Dorsolateral prefrontal cortex (tissue), 120 donors: ENCODE measurements at regions of chr17 and their contacts with region 1.

Region 1: DNA sequence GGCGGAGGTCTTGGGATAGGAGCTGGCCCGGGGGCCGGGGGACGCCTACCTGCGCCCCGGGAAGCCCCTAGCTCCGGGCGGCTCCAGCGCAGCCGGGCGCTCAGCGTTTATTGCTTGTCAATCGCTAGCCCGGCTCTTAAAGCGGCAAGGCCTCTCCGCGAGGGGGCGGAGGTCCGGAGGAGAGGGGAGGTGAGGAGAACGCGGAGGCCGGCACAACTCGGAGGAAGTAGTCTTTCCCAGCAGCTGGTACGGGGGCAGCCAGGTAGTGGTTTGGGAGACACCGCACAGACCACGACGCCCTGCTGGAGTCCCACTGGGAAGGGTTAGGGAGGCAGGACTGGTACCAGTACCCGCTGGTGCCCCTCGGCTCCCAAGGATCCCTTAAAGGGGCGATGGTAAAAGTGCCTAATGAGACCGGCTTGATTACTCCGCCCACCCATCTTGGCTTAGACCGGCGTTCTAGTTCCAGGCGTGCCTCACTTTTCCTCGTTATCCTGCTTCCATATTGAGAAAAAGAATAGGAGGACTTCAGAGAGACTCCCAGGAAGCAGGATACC is at the start of gene MPP2:
- DNase-seq: peak; percentile 70 to 92 (median 87)
- H3K4me3 ChIP-seq: peak within 1 kb of the TSS; percentile 59 to 98 (median 91)
- H3K27ac ChIP-seq: peak within 1 kb of the TSS; percentile 91 to 100 (median 98)
- H3K27me3 ChIP-seq: peaks cover 0 to 4% (median 0%) of the 10 kb centered on the region in 45 donors
- CTCF ChIP-seq: peak in 43 of 56 donors; percentile 0 to 62 (median 40)
- total RNA-seq, gene MPP2: 41.7 to 92.6 (median 64.0) TPM

Region 2: GRCh38 chr17:43778337-43779144 is 129.0 kb before region 1 on chr17 and contains the start of gene DUSP3:
- intact Hi-C with region 1: loop called in 1 of 2 experiments (anchors 5 kb)
- DNase-seq: peak; percentile 89 to 97 (median 94)
- H3K4me3 ChIP-seq: peak within 1 kb of the TSS; percentile 79 to 100 (median 97)
- H3K27ac ChIP-seq: peak within 1 kb of the TSS; percentile 86 to 100 (median 99)
- H3K27me3 ChIP-seq: no peaks in the 10 kb centered on the region
- CTCF ChIP-seq: peak in 7 of 56 donors; percentile 4 to 42 (median 17)
- total RNA-seq, gene DUSP3: 65.6 to 156 (median 103) TPM